ENCODE measurements at regions of chr11 and their contacts with region 1.

Region 1: GRCh38 chr11:72102946-72103753 is at the start of gene LAMTOR1:
- DNase-seq: peak; percentile 97 to 100 (median 99)

Region 2: DNA sequence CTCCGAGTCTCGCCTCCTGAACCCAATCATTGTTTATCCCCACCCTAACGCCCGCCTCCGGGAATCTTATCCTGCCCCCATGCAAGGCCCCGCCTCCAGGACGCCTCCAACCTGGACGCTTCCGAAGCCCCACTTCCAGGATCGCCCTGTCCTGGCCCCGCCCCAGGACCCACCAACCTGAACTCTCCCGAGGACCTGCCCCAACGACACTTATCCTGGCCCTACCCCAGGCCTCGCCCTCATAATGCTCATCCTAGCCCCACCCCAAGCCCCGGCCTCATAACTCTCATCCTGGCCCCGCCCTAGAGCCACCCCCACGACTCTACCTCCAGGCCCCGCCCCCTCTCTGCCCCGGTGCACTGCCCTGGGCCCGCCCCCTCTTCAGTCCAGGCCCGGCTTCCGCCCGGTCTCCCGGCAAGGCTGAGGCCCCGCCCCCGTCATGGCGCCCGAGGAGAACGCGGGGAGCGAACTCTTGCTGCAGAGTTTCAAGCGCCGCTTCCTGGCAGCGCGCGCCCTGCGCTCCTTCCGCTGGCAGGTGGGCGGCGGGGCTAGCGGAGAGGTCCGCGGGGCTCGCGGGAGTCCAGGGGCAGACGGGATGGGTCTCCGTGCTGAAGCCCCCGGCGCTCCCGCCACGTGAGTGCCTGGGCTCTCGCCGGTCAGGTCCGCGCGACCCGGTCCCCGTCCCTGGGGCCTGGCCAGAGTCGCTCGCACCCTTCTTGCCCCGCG is 315.9 kb before region 1 on chr11:
- intact Hi-C with region 1: no loop called
- DNase-seq: peak in 9 of 10 donors; percentile 57 to 97 (median 85)

Region 3: DNA sequence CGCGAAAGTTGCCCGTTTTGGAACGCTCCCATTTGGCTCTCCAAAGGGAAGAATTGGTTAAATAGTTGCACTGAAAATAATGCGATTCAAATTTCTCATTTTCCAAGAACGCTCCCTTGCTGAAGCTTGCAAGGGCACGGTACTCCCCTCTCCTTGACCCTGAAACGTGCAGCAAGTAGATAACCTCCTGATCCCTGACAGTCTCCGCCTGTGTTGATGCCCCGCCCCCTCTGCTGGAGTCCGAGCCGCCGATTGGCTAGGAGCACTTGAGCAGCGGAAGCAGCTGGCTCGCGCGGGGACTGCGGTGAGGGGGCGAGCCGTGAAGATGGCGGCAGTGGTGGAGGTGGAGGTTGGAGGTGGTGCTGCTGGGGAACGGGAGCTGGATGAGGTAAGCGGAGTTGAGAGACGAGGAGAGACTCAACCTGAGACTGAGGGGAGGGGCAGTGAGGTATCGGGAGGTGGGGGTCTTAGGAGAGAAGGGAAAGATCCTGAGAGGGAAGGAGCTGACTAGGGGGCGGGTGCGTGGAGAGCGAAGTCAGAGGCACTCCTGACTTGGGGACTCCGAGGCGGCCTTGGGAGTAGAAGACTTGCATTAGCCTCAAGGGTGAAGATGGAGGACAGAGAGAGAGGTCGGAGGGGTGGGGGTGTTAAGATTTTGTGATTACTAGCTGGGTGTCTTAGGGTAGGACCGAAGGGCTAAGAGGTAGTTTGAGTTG is 174.3 kb before region 1 on chr11 and contains the start of gene RNF121:
- intact Hi-C with region 1: loop called (anchors 5 kb)
- DNase-seq: peak; percentile 96 to 100 (median 99)

Region 4: GRCh38 chr11:71962428-71963038 is 140.6 kb before region 1 on chr11:
- intact Hi-C with region 1: no loop called
- DNase-seq: no peak

Region 5: DNA sequence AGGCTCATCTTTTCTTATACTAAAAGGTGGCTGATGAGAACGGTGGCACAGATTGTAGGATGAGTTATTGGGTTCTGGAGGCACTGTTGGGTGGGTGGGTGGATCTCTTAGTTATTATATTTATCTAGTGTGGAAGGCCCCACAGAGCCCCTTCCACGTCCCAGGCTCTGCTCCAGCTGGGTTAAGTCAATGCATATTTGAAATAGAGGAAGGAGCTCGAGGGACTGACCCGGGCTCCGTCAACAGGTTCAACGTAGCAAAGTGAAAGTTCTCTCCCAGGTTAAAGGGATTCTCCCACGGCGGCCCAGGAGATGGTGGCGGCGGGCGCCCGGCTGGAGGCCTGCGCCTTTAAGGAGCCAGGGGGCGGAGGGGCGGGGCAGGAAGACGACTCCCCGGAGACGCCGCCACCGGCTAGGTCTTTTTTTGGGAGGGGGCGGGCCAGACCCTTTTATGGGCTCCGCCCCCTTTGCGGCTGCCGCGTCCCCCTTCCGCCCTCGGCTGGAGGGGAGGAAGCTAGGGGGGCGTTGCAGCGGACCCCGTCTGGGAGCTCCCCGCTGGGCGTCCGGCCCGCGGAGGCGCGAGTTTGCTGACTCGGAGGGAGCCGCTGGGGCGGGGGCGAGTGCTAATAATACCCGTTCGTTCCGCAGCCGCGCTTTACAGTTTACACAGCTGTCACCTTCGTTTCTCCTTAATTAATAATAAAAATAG is 119.9 kb after region 1 on chr11:
- intact Hi-C with region 1: no loop called
- DNase-seq: peak; percentile 70 to 97 (median 86)